ENCODE measurements at regions of chr5 and their contacts with region 1.

Region 1: DNA sequence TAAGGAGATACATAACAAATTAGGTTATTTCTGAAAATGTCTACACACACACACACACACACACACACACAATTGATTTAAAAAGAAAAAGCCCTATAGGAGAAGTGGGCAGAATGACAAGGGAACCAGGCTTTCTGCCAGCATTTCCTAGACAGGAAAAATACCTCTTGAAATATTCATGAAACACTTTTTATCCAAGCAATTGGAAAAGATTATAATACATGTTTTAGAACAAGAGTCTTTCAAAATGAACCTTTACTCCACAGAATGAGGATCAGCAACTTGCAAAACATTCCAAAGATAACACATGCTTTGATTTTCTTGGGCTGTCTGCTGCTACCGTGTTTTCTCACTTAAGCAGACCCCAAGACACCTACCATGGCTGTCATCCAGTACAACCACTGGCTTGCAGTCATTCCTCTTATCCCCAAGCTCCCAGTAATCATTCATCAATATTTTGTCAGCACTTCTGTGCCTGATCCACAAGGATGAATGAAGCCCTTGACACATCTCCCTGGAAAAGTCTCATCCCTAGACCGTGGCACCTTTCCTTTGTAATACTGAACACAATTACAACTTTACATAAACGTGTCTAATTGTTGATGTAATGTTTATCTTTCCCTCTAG is 717.1 kb upstream of the ZNF608 start:
- DNase-seq: peak; percentile 4
- ATAC-seq: no peak
- H3K4me3 ChIP-seq: no peak overlapping the region
- H3K27ac ChIP-seq: no peak overlapping the region
- H3K4me1 ChIP-seq: no peaks in the 10 kb centered on the region
- H3K27me3 ChIP-seq: peaks cover 6% of the 10 kb centered on the region
- CTCF ChIP-seq: no peak
- POLR2A ChIP-seq: no peak
- RAD21 ChIP-seq: no peak

Region 2: DNA sequence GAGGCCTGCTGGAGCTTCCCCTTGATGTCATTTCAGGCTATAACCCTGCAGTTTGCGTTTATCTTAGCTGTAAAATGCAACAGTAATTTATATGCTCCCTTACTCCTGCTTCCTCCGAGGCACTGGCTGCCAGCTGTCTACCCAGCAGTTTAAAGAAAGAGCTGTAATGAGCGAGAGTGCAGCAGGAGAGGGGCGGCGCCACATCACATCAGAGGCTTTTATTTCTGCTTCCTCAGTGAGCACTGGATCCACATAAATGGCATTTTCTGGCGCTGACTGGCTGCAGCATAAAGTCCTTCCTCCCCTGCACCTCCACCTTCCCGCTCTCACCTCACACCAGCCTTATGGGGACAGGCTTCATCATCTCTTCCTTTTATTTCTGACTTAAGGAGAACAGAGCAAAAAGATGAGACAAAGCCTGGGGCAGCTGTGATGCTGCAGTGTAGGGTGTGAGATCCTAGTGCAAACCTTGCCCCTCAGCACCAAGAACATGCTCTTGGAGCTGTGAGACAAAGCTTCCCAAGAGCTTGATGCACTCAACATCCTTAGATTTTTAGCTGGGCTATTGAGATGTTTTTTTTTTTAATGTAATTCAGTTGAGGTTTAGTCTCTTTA is 112.4 kb after region 1 on chr5:
- CTCF ChIA-PET with region 1: no interaction called
- POLR2A ChIA-PET with region 1: no interaction called
- dilution Hi-C with region 1: no loop called
- in situ Hi-C with region 1: no loop called
- intact Hi-C with region 1: no loop called
- DNase-seq: no peak
- ATAC-seq: peak; percentile 76
- H3K4me3 ChIP-seq: no peak overlapping the region
- H3K27ac ChIP-seq: no peak overlapping the region
- H3K4me1 ChIP-seq: peaks cover 2% of the 10 kb centered on the region; the same call in 1 of the 2 replicates
- H3K27me3 ChIP-seq: peaks cover 1% of the 10 kb centered on the region; the same call in 1 of the 2 replicates
- CTCF ChIP-seq: no peak
- POLR2A ChIP-seq: no peak
- RAD21 ChIP-seq: no peak

Region 3: GRCh38 chr5:126753227-126753626 is 1289.6 kb after region 1 on chr5:
- CTCF ChIA-PET with region 1: no interaction called
- POLR2A ChIA-PET with region 1: no interaction called
- dilution Hi-C with region 1: no loop called
- in situ Hi-C with region 1: no loop called
- intact Hi-C with region 1: loop called (anchors 10 kb)
- DNase-seq: no peak
- ATAC-seq: no peak
- H3K4me3 ChIP-seq: no peak overlapping the region
- H3K27ac ChIP-seq: no peak overlapping the region
- H3K4me1 ChIP-seq: no peaks in the 10 kb centered on the region
- H3K27me3 ChIP-seq: no peaks in the 10 kb centered on the region
- CTCF ChIP-seq: no peak
- POLR2A ChIP-seq: no peak
- RAD21 ChIP-seq: no peak

Measured in IMR-90 (cell line).